Breast epithelium (tissue), 4 donors: ENCODE measurements at regions of chr15 and their contacts with region 1.

Region 1: GRCh38 chr15:79608066-79608864 is 176.1 kb downstream of the MINAR1 start:
- DNase-seq: no peak
- H3K4me3 ChIP-seq: no peak overlapping the region
- H3K27ac ChIP-seq: no peak overlapping the region
- H3K4me1 ChIP-seq: no peaks in the 10 kb centered on the region
- H3K27me3 ChIP-seq: peaks cover 0 to 17% of the 10 kb centered on the region in 2 donors
- CTCF ChIP-seq: no peak
- POLR2A ChIP-seq: no peak

Region 2: GRCh38 chr15:79572691-79573404 is 35.4 kb before region 1 on chr15:
- intact Hi-C with region 1: no loop called
- DNase-seq: no peak
- H3K4me3 ChIP-seq: no peak overlapping the region
- H3K27ac ChIP-seq: no peak overlapping the region
- H3K4me1 ChIP-seq: no peaks in the 10 kb centered on the region
- H3K27me3 ChIP-seq: no peaks in the 10 kb centered on the region
- CTCF ChIP-seq: no peak
- POLR2A ChIP-seq: no peak

Region 3: GRCh38 chr15:79595306-79595705 is 13.0 kb before region 1 on chr15:
- intact Hi-C with region 1: loop called (anchors 1 kb)
- DNase-seq: no peak
- H3K4me3 ChIP-seq: no peak overlapping the region
- H3K27ac ChIP-seq: no peak overlapping the region
- H3K4me1 ChIP-seq: no peaks in the 10 kb centered on the region
- H3K27me3 ChIP-seq: peaks cover 0 to 3% of the 10 kb centered on the region in 2 donors
- CTCF ChIP-seq: no peak
- POLR2A ChIP-seq: no peak

Region 4: GRCh38 chr15:79881254-79881653 is 273.0 kb after region 1 on chr15:
- intact Hi-C with region 1: no loop called
- DNase-seq: no peak
- H3K4me3 ChIP-seq: no peak overlapping the region
- H3K27ac ChIP-seq: no peak overlapping the region
- H3K4me1 ChIP-seq: no peaks in the 10 kb centered on the region
- H3K27me3 ChIP-seq: no peaks in the 10 kb centered on the region
- CTCF ChIP-seq: no peak
- POLR2A ChIP-seq: no peak